K562 (cell line): ENCODE measurements at regions of chr1 and their contacts with region 1.

Region 1: DNA sequence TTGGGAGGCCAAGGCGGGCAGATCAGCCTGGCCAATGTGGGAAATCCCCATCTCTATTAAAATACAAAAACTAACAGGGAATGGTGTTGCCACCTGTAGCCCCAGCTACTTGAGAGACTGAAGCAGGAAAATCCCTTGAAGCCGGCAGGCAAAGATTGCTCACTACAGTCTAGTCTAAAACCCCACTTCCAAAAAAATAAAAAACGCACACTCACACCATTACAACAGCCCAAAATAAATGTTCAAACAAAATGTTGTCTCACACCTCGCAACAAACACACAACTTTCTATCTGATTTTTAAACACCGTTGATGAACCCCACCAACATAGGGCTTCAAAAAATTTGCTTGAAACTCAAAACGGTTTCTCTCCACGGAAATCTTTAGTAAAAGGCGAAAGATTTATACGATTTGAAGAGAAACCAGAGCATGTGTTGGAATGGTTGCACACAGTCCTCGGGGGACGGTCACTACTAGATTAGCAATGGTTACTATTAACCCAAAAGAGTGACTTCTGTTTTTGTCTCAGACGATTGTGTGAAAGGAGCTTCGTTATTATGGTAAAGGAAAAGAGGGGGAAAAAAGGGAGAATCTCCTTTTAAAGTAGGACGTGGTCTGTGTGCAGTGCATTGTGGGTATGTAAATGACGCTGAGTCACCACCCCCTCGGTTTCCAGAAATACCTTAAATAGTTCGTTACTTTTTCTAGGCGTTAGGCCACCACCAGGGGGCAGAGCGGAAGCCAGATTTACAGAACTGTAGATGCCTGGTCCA is at the start of gene RNU5D-1:
- DNase-seq: peak; percentile 87 to 99 (median 90)
- ATAC-seq: peak; percentile 87
- H3K4me3 ChIP-seq: 0 out of 2 replicates have a peak within 1 kb of the TSS, but pooled peaks have one; percentile 3
- H3K27ac ChIP-seq: peak within 1 kb of the TSS; percentile 100
- H3K4me1 ChIP-seq: peaks cover 11 to 16% of the 10 kb centered on the region in 2 experiments
- H3K27me3 ChIP-seq: no peaks in the 10 kb centered on the region
- CTCF ChIP-seq: peak; percentile 79 to 97 (median 93)
- EP300 ChIP-seq: peak; percentile 80
- POLR2A ChIP-seq: peak; percentile 100
- RAD21 ChIP-seq: peak; percentile 4 to 54
- polyA plus RNA-seq, gene RNU5D-1: not detected

Region 2: DNA sequence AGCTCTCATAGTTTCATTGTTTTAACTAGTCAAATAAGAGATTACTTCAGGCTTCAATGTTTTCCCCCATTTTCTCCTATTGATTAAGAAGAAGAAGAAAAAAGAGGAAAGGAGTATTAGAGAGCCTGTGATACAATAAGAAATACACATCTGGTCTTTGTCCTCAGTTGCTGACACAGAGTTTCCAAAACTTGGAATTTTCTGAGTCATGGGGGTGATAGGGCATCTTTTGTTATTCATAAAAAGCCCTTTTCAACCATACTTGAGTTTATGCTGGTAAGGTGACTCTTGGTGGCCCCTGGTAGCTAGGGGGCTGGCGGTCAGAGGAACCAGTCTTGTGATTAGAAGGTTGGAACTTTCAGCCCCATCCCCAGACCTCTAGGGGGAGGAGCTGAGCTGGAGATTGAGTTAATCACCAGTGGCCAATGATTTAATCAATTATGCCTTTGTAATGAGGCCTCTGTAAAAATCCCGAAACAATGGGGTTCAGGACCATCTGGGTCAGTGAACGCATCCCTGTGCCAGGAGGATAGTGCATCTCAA is 560.6 kb before region 1 on chr1:
- CTCF ChIA-PET with region 1: no interaction called
- POLR2A ChIA-PET with region 1: no interaction called
- in situ Hi-C with region 1: no loop called
- intact Hi-C with region 1: no loop called
- DNase-seq: peak in 2 of 4 experiments; percentile 29 to 34
- ATAC-seq: peak; percentile 35; the same call in 1 of the 3 replicates
- H3K4me3 ChIP-seq: no peak overlapping the region
- H3K27ac ChIP-seq: no peak overlapping the region
- H3K4me1 ChIP-seq: peaks cover 0 to 2% of the 10 kb centered on the region in 2 experiments; a peak in 1 of 5 replicates
- H3K27me3 ChIP-seq: peaks cover 23 to 35% of the 10 kb centered on the region in 2 experiments
- CTCF ChIP-seq: peak in 2 of 3 experiments; percentile 23 to 30; a peak in 2 of 6 replicates
- EP300 ChIP-seq: no peak
- POLR2A ChIP-seq: no peak
- RAD21 ChIP-seq: no peak

Region 3: GRCh38 chr1:44576456-44577150 is 154.3 kb before region 1 on chr1:
- CTCF ChIA-PET with region 1: no interaction called
- POLR2A ChIA-PET with region 1: no interaction called
- in situ Hi-C with region 1: no loop called
- intact Hi-C with region 1: no loop called
- DNase-seq: no peak
- ATAC-seq: no peak
- H3K4me3 ChIP-seq: no peak overlapping the region
- H3K27ac ChIP-seq: no peak overlapping the region
- H3K4me1 ChIP-seq: no peaks in the 10 kb centered on the region
- H3K27me3 ChIP-seq: peaks cover 34 to 47% of the 10 kb centered on the region in 2 experiments
- CTCF ChIP-seq: no peak
- EP300 ChIP-seq: no peak
- POLR2A ChIP-seq: no peak
- RAD21 ChIP-seq: no peak

Region 4: GRCh38 chr1:44747878-44748277 is 17.0 kb after region 1 on chr1:
- CTCF ChIA-PET with region 1: no interaction called
- POLR2A ChIA-PET with region 1: interaction called, 43 read pairs
- in situ Hi-C with region 1: no loop called
- intact Hi-C with region 1: no loop called
- DNase-seq: no peak
- ATAC-seq: peak; percentile 64
- H3K4me3 ChIP-seq: no peak overlapping the region
- H3K27ac ChIP-seq: no peak overlapping the region
- H3K4me1 ChIP-seq: peaks cover 3 to 8% of the 10 kb centered on the region in 2 experiments; a peak in 4 of 5 replicates
- H3K27me3 ChIP-seq: no peaks in the 10 kb centered on the region
- CTCF ChIP-seq: peak; percentile 34 to 48 (median 43); a peak in 4 of 6 replicates
- EP300 ChIP-seq: no peak
- POLR2A ChIP-seq: no peak
- RAD21 ChIP-seq: no peak